H1 (cell line): ENCODE measurements at regions of chr12 and their contacts with region 1.

Region 1: GRCh38 chr12:78470354-78471195 is 394.0 kb upstream of the SYT1 start:
- DNase-seq: no peak
- H3K4me3 ChIP-seq: no peak overlapping the region
- H3K27ac ChIP-seq: no peak overlapping the region
- H3K4me1 ChIP-seq: no peaks in the 10 kb centered on the region
- H3K27me3 ChIP-seq: no peaks in the 10 kb centered on the region
- CTCF ChIP-seq: peak in 2 of 3 experiments; percentile 60 to 61; a peak in 2 of 4 replicates
- EP300 ChIP-seq: no peak
- POLR2A ChIP-seq: no peak
- RAD21 ChIP-seq: peak; percentile 67 to 71

Region 2: DNA sequence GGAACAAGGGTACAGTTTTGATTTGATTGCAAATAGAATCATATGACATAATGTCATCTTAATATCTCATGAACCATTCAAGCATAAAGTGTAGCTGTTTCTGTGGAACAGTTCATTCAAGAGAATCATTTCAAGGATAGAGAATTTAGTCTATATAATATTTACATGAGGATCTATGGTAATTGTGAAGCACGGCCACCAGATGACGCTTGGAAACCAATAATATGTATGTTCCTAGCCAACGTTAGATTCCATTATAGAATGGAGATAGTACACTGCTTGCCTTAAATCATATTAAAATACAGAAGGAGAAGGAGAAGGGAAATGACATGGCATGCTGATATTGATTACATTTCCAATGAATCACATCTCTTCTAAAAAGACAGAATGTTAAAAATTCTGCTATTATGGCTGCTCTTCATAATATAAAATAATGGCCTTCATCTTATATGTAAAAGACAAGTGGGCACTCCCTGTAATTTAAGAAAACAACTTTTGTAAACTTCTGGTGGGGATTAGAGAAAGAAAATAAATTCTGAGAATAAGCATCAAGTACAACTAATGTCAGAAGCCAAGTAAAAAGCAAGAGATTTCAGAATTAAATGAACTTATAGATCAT is 288.9 kb before region 1 on chr12:
- CTCF ChIA-PET with region 1: interaction called, 20 read pairs
- POLR2A ChIA-PET with region 1: no interaction called
- DNase-seq: no peak
- H3K4me3 ChIP-seq: no peak overlapping the region
- H3K27ac ChIP-seq: no peak overlapping the region
- H3K4me1 ChIP-seq: no peaks in the 10 kb centered on the region; a peak in 1 of 7 replicates
- H3K27me3 ChIP-seq: no peaks in the 10 kb centered on the region
- CTCF ChIP-seq: peak in 2 of 3 experiments; percentile 50 to 52; a peak in 2 of 4 replicates
- EP300 ChIP-seq: no peak
- POLR2A ChIP-seq: no peak
- RAD21 ChIP-seq: peak; percentile 91 to 96

Region 3: GRCh38 chr12:78315028-78315427 is 155.5 kb before region 1 on chr12:
- CTCF ChIA-PET with region 1: no interaction called
- POLR2A ChIA-PET with region 1: no interaction called
- DNase-seq: no peak
- H3K4me3 ChIP-seq: no peak overlapping the region
- H3K27ac ChIP-seq: no peak overlapping the region
- H3K4me1 ChIP-seq: peaks cover 0 to 2% (median 0%) of the 10 kb centered on the region in 4 experiments; a peak in 2 of 7 replicates
- H3K27me3 ChIP-seq: no peaks in the 10 kb centered on the region
- CTCF ChIP-seq: no peak
- EP300 ChIP-seq: no peak
- POLR2A ChIP-seq: no peak
- RAD21 ChIP-seq: no peak

Region 4: DNA sequence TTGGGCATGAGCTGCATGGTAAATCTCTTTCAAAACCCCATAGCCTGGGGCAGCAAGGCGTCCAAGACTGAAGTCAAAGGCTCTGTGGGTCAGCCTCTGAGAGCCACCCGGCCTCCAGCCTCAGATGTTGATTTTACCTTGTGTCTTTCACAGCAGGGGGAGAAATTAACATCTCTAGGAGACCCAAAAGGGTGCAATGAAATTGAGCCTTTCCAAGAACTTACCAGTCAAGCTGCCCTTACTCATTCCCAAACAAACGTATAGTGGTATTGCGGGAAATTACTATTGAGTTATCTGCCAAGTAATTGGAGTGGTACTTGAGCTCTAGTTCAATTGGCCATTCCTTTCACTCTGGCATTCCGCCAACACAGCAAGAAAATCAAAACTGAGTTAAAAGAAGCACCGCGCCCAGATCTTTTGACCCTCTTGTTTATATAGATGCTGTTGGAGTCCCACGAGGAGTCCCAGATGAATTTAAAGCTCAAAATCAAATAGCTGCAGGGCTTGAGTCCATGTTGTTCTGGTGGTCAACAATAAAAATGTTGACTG is 13.3 kb after region 1 on chr12:
- CTCF ChIA-PET with region 1: interaction called, 29 read pairs
- POLR2A ChIA-PET with region 1: no interaction called
- DNase-seq: no peak
- H3K4me3 ChIP-seq: no peak overlapping the region
- H3K27ac ChIP-seq: no peak overlapping the region
- H3K4me1 ChIP-seq: no peaks in the 10 kb centered on the region
- H3K27me3 ChIP-seq: no peaks in the 10 kb centered on the region
- CTCF ChIP-seq: no peak
- EP300 ChIP-seq: no peak
- POLR2A ChIP-seq: no peak
- RAD21 ChIP-seq: no peak

Region 5: GRCh38 chr12:78562368-78563205 is 92.0 kb after region 1 on chr12:
- CTCF ChIA-PET with region 1: interaction called, 16 read pairs
- POLR2A ChIA-PET with region 1: no interaction called
- DNase-seq: no peak
- H3K4me3 ChIP-seq: no peak overlapping the region
- H3K27ac ChIP-seq: no peak overlapping the region
- H3K4me1 ChIP-seq: peaks cover 0 to 3% (median under 1%) of the 10 kb centered on the region in 4 experiments; a peak in 3 of 7 replicates
- H3K27me3 ChIP-seq: no peaks in the 10 kb centered on the region
- CTCF ChIP-seq: peak in 2 of 3 experiments; percentile 27 to 54; a peak in 2 of 4 replicates
- EP300 ChIP-seq: no peak
- POLR2A ChIP-seq: no peak
- RAD21 ChIP-seq: peak; percentile 37 to 53

Region 6: GRCh38 chr12:78584695-78585531 is 114.3 kb after region 1 on chr12:
- CTCF ChIA-PET with region 1: interaction called, 19 read pairs
- POLR2A ChIA-PET with region 1: no interaction called
- DNase-seq: peak; percentile 49 to 62
- H3K4me3 ChIP-seq: no peak overlapping the region
- H3K27ac ChIP-seq: no peak overlapping the region
- H3K4me1 ChIP-seq: no peaks in the 10 kb centered on the region
- H3K27me3 ChIP-seq: no peaks in the 10 kb centered on the region
- CTCF ChIP-seq: peak; percentile 72 to 90 (median 82)
- EP300 ChIP-seq: no peak
- POLR2A ChIP-seq: no peak
- RAD21 ChIP-seq: peak; percentile 98 to 99